Activated CD4-positive, alpha-beta memory T cell treated with anti-CD3 and anti-CD28 coated beads for 36 hours (primary cell): ENCODE measurements at regions of chr4 and their contacts with region 1.

Region 1: GRCh38 chr4:153488006-153488891 is 22.1 kb downstream of the TMEM131L start:
- DNase-seq: peak; percentile 88
- H3K4me3 Mint-ChIP-seq: peak overlapping the region; percentile 56
- H3K27ac Mint-ChIP-seq: peak overlapping the region; percentile 87
- H3K4me1 Mint-ChIP-seq: peaks cover 73% of the 10 kb centered on the region
- H3K27me3 Mint-ChIP-seq: no peaks in the 10 kb centered on the region

Region 2: DNA sequence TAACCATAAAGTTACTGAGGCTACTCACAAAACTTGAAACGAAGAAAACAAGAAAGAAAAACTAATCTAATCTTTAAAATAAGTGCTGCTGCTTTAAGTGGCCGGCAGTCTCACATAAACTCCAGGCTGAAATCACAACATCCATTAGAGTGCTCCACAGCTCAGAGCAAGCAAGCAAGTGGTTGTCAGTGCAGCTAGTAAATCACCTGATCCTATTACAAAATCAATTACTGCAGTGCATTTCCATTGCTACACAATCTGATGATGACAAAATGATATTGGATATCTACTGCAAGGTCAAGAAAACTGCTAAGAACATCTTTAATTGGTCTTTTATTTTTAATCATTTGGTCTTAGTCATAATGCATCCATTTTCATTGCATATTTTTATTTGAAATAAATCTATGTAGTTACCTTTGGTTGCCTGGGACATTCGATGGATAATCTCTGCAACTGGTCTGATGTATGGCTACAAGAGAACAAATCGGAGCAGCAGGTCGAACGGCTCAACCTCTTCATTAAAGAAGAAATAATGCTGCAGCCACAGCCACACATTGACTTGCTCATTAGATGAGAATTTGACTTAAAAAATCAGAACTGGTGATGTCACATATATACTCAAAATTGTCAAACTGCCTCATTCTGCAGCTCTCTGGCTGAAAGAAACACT is 1040.1 kb before region 1 on chr4:
- CTCF ChIA-PET with region 1: no interaction called
- POLR2A ChIA-PET with region 1: no interaction called
- intact Hi-C with region 1: no loop called
- DNase-seq: no peak
- H3K4me3 Mint-ChIP-seq: no peak overlapping the region
- H3K27ac Mint-ChIP-seq: no peak overlapping the region
- H3K4me1 Mint-ChIP-seq: peaks cover 11% of the 10 kb centered on the region
- H3K27me3 Mint-ChIP-seq: no peaks in the 10 kb centered on the region

Region 3: GRCh38 chr4:153432968-153433753 is 55.1 kb before region 1 on chr4:
- CTCF ChIA-PET with region 1: interaction called, 5 read pairs
- POLR2A ChIA-PET with region 1: no interaction called
- intact Hi-C with region 1: loop called (anchors 1 kb)
- DNase-seq: peak; percentile 88
- H3K4me3 Mint-ChIP-seq: peak overlapping the region; percentile 77
- H3K27ac Mint-ChIP-seq: peak overlapping the region; percentile 74
- H3K4me1 Mint-ChIP-seq: peaks cover 52% of the 10 kb centered on the region
- H3K27me3 Mint-ChIP-seq: no peaks in the 10 kb centered on the region

Region 4: GRCh38 chr4:153471691-153472080 is 16.6 kb before region 1 on chr4:
- CTCF ChIA-PET with region 1: interaction called, 33 read pairs
- POLR2A ChIA-PET with region 1: interaction called, 13 read pairs
- intact Hi-C with region 1: loop called (anchors 1 kb)
- DNase-seq: peak; percentile 68
- H3K4me3 Mint-ChIP-seq: peak overlapping the region; percentile 59
- H3K27ac Mint-ChIP-seq: peak overlapping the region; percentile 77
- H3K4me1 Mint-ChIP-seq: peaks cover 69% of the 10 kb centered on the region
- H3K27me3 Mint-ChIP-seq: no peaks in the 10 kb centered on the region

Region 5: DNA sequence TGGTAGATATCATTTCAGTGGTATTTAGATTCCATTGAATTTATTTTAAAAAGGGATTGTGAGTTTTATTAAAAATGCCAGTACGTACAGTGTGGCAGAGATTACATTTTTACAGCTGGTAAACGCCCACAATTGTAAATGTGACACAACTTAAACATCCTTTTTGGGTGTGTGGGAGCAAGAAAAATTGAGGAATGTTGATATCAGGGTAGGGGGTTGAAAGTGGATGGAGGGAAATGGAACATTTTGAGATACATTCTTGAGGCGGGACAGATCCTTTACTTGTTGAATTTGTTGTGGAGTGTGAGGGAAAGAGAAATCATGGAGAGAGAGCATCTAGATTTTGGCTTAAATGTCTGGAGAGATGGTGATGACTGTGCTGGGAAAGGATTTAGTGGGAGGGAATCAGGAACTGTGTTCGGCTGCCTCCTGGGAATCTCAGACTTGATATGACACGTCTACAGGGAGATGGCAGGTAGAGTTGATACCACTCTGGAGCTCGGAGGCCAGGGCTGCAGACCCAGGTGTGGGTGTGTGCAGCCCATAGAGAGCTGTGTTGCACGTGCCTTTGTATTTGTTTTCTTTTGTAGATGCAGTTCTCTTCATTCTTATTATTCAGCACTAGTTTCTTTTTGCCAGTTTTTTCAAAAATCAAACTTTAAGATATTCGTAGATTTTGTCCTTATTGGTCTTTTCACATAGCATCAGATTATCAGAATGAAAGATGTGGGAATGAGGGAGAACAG is 11.2 kb before region 1 on chr4:
- CTCF ChIA-PET with region 1: interaction called, 5 read pairs
- POLR2A ChIA-PET with region 1: interaction called, 7 read pairs
- intact Hi-C with region 1: loop called (anchors 1 kb)
- DNase-seq: no peak
- H3K4me3 Mint-ChIP-seq: no peak overlapping the region
- H3K27ac Mint-ChIP-seq: peak overlapping the region; percentile 0
- H3K4me1 Mint-ChIP-seq: peaks cover 67% of the 10 kb centered on the region
- H3K27me3 Mint-ChIP-seq: no peaks in the 10 kb centered on the region

Region 6: GRCh38 chr4:153497988-153498967 is 10.0 kb after region 1 on chr4:
- CTCF ChIA-PET with region 1: interaction called, 7 read pairs
- POLR2A ChIA-PET with region 1: interaction called, 31 read pairs
- intact Hi-C with region 1: loop called (anchors 1 kb)
- DNase-seq: no peak
- H3K4me3 Mint-ChIP-seq: peak overlapping the region; percentile 67
- H3K27ac Mint-ChIP-seq: peak overlapping the region; percentile 98
- H3K4me1 Mint-ChIP-seq: peaks cover 94% of the 10 kb centered on the region
- H3K27me3 Mint-ChIP-seq: no peaks in the 10 kb centered on the region

Region 7: DNA sequence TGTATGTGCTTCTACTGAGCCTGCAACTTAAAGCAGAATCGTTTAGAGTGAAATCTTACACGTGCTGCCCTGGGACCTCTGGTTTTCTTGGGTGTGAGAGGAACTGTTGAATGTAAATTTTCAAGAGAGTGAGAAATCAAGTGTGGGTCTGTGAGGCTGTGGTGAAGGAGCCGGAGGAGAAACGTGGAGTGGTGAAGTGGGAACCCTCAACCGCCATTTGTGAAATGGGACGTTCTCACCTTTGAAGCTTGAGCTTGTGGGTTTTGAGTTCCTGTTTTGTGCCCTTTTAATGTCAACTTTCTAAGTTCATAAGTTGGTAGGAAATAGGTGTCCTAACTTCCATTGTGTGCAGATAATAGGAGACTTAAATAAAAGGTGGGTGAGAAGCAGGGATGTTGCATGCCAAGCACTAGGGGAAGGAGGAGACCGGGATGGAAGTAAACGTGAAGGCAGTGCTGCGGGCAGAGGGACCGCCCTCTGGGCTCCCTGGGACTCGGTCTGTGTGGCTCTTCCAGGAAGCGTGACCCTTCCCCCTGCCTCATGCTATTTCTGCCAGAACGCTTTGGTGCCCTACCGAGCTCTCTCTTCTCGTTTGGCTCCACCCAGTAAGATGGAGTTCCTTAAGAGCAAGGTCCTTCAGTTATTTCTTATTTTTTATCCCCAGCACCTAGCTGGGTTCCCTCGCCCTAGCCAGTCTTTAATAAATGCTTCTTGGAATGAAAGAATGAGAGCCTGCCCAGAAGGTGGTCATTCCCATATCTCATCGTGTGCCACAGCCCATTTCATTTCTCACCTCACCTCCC is 34.0 kb after region 1 on chr4:
- CTCF ChIA-PET with region 1: interaction called, 3 read pairs
- POLR2A ChIA-PET with region 1: interaction called, 10 read pairs
- intact Hi-C with region 1: loop called (anchors 1 kb)
- DNase-seq: peak; percentile 80
- H3K4me3 Mint-ChIP-seq: peak overlapping the region; percentile 67
- H3K27ac Mint-ChIP-seq: peak overlapping the region; percentile 96
- H3K4me1 Mint-ChIP-seq: peaks cover 91% of the 10 kb centered on the region
- H3K27me3 Mint-ChIP-seq: no peaks in the 10 kb centered on the region